ENCODE measurements at regions of chr6 and their contacts with region 1.

Region 1: GRCh38 chr6:127464881-127465459 is 5.8 kb upstream of the KIAA0408 start:
- DNase-seq: peak; percentile 49 to 63
- ATAC-seq: peak; percentile 67 to 77
- H3K4me3 ChIP-seq: no peak overlapping the region
- H3K27ac ChIP-seq: peak overlapping the region; percentile 73 to 94 (median 90)
- H3K4me1 ChIP-seq: peaks cover 30 to 44% of the 10 kb centered on the region in 2 donors
- H3K27me3 ChIP-seq: no peaks in the 10 kb centered on the region
- CTCF ChIP-seq: peak; percentile 56 to 82 (median 64)
- POLR2A ChIP-seq: no peak

Region 2: DNA sequence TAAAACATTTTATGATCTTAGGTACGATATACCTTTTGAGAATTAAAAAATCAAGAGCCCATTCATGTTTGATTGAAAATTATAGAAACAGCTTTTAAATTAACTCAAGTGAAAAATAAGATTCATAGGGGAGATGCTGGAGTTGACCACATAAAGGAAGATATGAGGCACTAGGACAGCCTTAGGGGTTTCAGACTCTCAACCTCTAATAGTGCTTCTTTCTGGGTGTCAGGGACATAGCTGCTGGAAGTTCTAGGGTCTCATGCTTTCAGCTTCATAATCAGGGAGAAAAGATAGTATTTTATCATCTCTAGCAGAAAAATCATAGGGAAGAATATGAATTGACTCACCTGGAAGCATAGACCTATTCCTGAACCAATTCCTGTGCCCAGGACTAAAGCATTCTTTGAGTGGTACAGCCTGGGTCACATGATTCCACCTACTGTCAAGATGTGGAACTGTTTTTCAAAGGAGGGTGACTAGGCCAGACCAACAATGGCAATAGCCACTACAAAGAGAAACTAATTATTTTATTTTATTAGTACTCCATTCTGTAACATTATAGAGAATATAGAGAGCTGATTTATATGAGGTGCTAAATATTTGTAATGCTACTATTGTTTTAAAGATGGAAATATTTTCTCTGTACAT is 1152.8 kb before region 1 on chr6:
- in situ Hi-C with region 1: no loop called
- intact Hi-C with region 1: no loop called
- DNase-seq: no peak
- ATAC-seq: no peak
- H3K4me3 ChIP-seq: no peak overlapping the region
- H3K27ac ChIP-seq: no peak overlapping the region
- H3K4me1 ChIP-seq: no peaks in the 10 kb centered on the region
- H3K27me3 ChIP-seq: no peaks in the 10 kb centered on the region
- CTCF ChIP-seq: no peak
- POLR2A ChIP-seq: no peak

Region 3: GRCh38 chr6:127186889-127187288 is 278.1 kb before region 1 on chr6:
- in situ Hi-C with region 1: loop called in 1 of 4 experiments (anchors 25 kb)
- intact Hi-C with region 1: no loop called
- DNase-seq: peak; percentile 6 to 58
- ATAC-seq: no peak
- H3K4me3 ChIP-seq: no peak overlapping the region
- H3K27ac ChIP-seq: peak overlapping the region in 2 of 4 donors; percentile 74 to 78
- H3K4me1 ChIP-seq: peaks cover 26 to 29% of the 10 kb centered on the region in 2 donors
- H3K27me3 ChIP-seq: no peaks in the 10 kb centered on the region
- CTCF ChIP-seq: peak; percentile 15 to 45 (median 22)
- POLR2A ChIP-seq: no peak

Region 4: GRCh38 chr6:127302728-127303660 is 162.0 kb before region 1 on chr6:
- in situ Hi-C with region 1: no loop called
- intact Hi-C with region 1: loop called (anchors 5 kb)
- DNase-seq: no peak
- ATAC-seq: peak; percentile 35 to 49
- H3K4me3 ChIP-seq: no peak overlapping the region
- H3K27ac ChIP-seq: no peak overlapping the region
- H3K4me1 ChIP-seq: peaks cover 9 to 13% of the 10 kb centered on the region in 2 donors
- H3K27me3 ChIP-seq: no peaks in the 10 kb centered on the region
- CTCF ChIP-seq: peak in 4 of 5 experiments; percentile 39 to 63 (median 60)
- POLR2A ChIP-seq: no peak

Region 5: GRCh38 chr6:127342946-127343808 is 121.8 kb before region 1 on chr6 and contains the start of gene ECHDC1:
- in situ Hi-C with region 1: loop called in 1 of 4 experiments (anchors 10 kb)
- intact Hi-C with region 1: no loop called
- DNase-seq: peak; percentile 26 to 44
- ATAC-seq: peak; percentile 83 to 84
- H3K4me3 ChIP-seq: peak within 1 kb of the TSS; percentile 72 to 91 (median 78)
- H3K27ac ChIP-seq: peak within 1 kb of the TSS; percentile 80 to 88 (median 82)
- H3K4me1 ChIP-seq: peaks cover 13 to 32% of the 10 kb centered on the region in 2 donors
- H3K27me3 ChIP-seq: no peaks in the 10 kb centered on the region
- CTCF ChIP-seq: peak in 2 of 5 experiments; percentile 16 to 18
- POLR2A ChIP-seq: peak; percentile 19 to 33
- total RNA-seq, gene ECHDC1: 31.4 to 45.3 (median 33.6) TPM

Region 6: DNA sequence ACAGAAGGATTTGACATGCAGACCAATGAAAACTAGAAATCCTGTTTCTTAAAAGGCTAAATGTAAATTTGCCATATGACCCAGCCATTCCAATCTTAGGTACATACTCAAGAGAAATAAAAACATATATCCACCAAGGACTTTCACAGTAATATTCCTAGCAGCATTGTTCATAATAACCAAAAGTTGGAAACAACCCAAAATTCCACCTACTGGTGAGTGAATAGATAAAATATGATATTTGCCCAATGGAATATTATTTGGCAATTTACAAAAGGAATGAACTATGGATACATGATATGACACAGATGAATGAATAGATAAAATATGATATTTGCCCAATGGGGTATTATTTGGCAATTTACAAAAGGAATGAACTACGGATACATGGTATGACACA is 31.5 kb after region 1 on chr6:
- in situ Hi-C with region 1: no loop called
- intact Hi-C with region 1: no loop called
- DNase-seq: no peak
- ATAC-seq: no peak
- H3K4me3 ChIP-seq: no peak overlapping the region
- H3K27ac ChIP-seq: no peak overlapping the region
- H3K4me1 ChIP-seq: no peaks in the 10 kb centered on the region
- H3K27me3 ChIP-seq: no peaks in the 10 kb centered on the region
- CTCF ChIP-seq: no peak
- POLR2A ChIP-seq: no peak

Region 7: DNA sequence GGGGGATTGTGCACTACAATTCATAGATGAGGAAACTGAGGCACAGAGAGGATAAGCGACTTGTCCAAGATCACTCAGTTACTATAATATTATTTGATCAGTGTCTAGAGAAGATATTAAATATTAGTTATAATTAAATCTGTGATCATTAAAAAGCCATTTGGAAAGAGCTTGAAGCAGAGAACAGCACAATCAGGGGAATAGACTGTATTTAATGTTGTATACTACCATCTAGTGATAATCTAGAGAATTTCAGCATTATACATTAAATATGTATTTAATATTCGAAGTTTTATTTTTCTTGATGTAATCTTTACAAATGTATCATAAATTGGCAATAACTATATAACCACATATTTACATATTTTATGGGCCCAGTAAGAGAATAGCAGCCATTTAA is 74.3 kb after region 1 on chr6:
- in situ Hi-C with region 1: loop called (anchors 5 to 10 kb)
- intact Hi-C with region 1: loop called (anchors 1 kb)
- DNase-seq: no peak
- ATAC-seq: peak; percentile 39 to 60
- H3K4me3 ChIP-seq: no peak overlapping the region
- H3K27ac ChIP-seq: no peak overlapping the region
- H3K4me1 ChIP-seq: no peaks in the 10 kb centered on the region
- H3K27me3 ChIP-seq: no peaks in the 10 kb centered on the region
- CTCF ChIP-seq: peak in 4 of 5 experiments; percentile 34 to 51 (median 40)
- POLR2A ChIP-seq: no peak

Region 8: GRCh38 chr6:127547215-127547614 is 82.2 kb after region 1 on chr6:
- in situ Hi-C with region 1: loop called in 1 of 4 experiments (anchors 10 kb)
- intact Hi-C with region 1: no loop called
- DNase-seq: no peak
- ATAC-seq: no peak
- H3K4me3 ChIP-seq: no peak overlapping the region
- H3K27ac ChIP-seq: no peak overlapping the region
- H3K4me1 ChIP-seq: no peaks in the 10 kb centered on the region
- H3K27me3 ChIP-seq: no peaks in the 10 kb centered on the region
- CTCF ChIP-seq: no peak
- POLR2A ChIP-seq: no peak

Region 9: GRCh38 chr6:127641905-127642304 is 176.9 kb after region 1 on chr6:
- in situ Hi-C with region 1: no loop called
- intact Hi-C with region 1: loop called (anchors 2 kb)
- DNase-seq: no peak
- ATAC-seq: no peak
- H3K4me3 ChIP-seq: no peak overlapping the region
- H3K27ac ChIP-seq: no peak overlapping the region
- H3K4me1 ChIP-seq: no peaks in the 10 kb centered on the region
- H3K27me3 ChIP-seq: no peaks in the 10 kb centered on the region
- CTCF ChIP-seq: peak in 3 of 5 experiments; percentile 27 to 56 (median 35)
- POLR2A ChIP-seq: no peak

Measured in gastrocnemius medialis (tissue), 4 donors.